Activated CD4-positive, alpha-beta T cell treated with anti-CD3 and anti-CD28 coated beads, Interleukin-2, amount 10 ng/mL, durations not matched to agents 24 days and 14 days (primary cell): ENCODE measurements at regions of chr11 and their contacts with region 1.

Region 1: GRCh38 chr11:122853971-122854446 is 15.7 kb downstream of the CRTAM start:
- DNase-seq: peak; percentile 85
- H3K4me3 Mint-ChIP-seq: no peak overlapping the region
- H3K27ac Mint-ChIP-seq: no peak overlapping the region
- H3K4me1 Mint-ChIP-seq: peaks cover 41% of the 10 kb centered on the region
- H3K27me3 Mint-ChIP-seq: peaks cover 17% of the 10 kb centered on the region

Region 2: GRCh38 chr11:122628810-122629555 is 225.0 kb before region 1 on chr11:
- intact Hi-C with region 1: loop called (anchors 1 kb)
- DNase-seq: peak; percentile 88
- H3K4me3 Mint-ChIP-seq: no peak overlapping the region
- H3K27ac Mint-ChIP-seq: no peak overlapping the region
- H3K4me1 Mint-ChIP-seq: no peaks in the 10 kb centered on the region
- H3K27me3 Mint-ChIP-seq: peaks cover 20% of the 10 kb centered on the region

Region 3: GRCh38 chr11:122697636-122698167 is 156.3 kb before region 1 on chr11:
- intact Hi-C with region 1: loop called (anchors 2 kb)
- DNase-seq: peak; percentile 79
- H3K4me3 Mint-ChIP-seq: peak overlapping the region; percentile 63
- H3K27ac Mint-ChIP-seq: peak overlapping the region; percentile 82
- H3K4me1 Mint-ChIP-seq: peaks cover 43% of the 10 kb centered on the region
- H3K27me3 Mint-ChIP-seq: peaks cover 5% of the 10 kb centered on the region

Region 4: DNA sequence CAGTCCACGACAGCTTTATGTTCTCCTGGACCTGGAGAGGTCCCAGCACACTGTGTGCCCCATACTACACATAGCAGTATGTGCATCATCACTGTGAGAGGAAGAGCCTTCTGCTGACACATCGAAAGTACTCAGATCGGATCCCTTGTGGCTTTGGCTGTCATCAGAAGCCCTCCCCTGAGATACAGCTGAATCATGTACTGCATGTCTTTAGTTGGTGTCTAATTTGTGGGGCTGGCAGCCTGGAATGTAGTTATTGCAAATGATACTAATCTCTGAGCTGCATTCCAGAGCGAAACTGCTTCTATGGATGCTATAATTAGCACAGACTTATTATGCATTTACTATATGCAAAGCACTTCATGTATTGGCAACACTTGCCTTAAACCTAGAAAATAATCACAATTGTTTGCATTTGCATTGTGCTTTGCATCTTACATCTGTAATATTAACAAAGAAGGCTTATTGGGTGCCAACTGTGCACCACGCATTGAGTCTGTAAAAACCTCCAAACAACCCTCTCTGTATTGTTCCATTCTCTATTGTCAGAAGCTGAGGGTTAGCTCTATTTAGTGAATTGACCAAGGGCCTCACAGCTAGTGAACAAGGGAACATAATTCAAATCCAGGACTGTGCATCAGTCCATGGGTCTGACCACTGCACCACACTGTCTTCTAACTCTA is 104.9 kb before region 1 on chr11:
- intact Hi-C with region 1: loop called (anchors 1 kb)
- DNase-seq: peak; percentile 87
- H3K4me3 Mint-ChIP-seq: no peak overlapping the region
- H3K27ac Mint-ChIP-seq: peak overlapping the region; percentile 17
- H3K4me1 Mint-ChIP-seq: peaks cover 20% of the 10 kb centered on the region
- H3K27me3 Mint-ChIP-seq: peaks cover 21% of the 10 kb centered on the region

Region 5: DNA sequence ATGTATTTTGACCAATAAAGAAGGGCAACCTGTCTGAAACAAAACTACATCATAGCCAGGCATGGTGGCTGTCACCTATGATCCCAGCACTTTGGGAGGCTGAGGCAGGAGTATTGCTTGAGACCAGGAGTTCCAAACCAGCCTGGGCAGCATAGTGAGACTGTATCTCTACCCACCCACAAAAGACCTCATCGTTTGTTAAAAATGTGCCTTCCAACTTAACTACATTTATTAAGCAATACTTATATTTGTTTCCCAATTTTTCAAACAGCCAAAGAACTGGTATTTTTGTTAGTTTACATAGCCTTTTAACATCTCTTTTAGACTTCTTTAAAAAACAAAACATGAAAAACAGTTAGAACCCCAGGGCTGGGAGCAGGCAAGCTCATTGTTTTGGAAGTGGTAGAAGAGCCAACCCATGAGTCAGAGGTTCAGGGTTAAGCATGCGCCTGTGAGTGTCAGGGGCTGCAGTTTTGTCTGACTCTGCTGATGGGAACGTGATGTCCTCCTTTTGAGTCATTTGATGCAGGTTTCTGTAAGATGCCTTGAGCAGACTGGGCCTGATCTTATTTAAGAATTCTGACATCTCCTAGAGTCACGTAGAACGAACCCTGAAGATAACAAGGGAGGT is 69.6 kb before region 1 on chr11:
- intact Hi-C with region 1: no loop called
- DNase-seq: no peak
- H3K4me3 Mint-ChIP-seq: no peak overlapping the region
- H3K27ac Mint-ChIP-seq: no peak overlapping the region
- H3K4me1 Mint-ChIP-seq: no peaks in the 10 kb centered on the region
- H3K27me3 Mint-ChIP-seq: no peaks in the 10 kb centered on the region

Region 6: GRCh38 chr11:122796128-122796717 is 57.8 kb before region 1 on chr11:
- intact Hi-C with region 1: loop called (anchors 1 kb)
- DNase-seq: peak; percentile 88
- H3K4me3 Mint-ChIP-seq: no peak overlapping the region
- H3K27ac Mint-ChIP-seq: no peak overlapping the region
- H3K4me1 Mint-ChIP-seq: no peaks in the 10 kb centered on the region
- H3K27me3 Mint-ChIP-seq: no peaks in the 10 kb centered on the region

Region 7: GRCh38 chr11:122843281-122844141 is 10.5 kb before region 1 on chr11:
- intact Hi-C with region 1: loop called (anchors 2 kb)
- DNase-seq: peak; percentile 75
- H3K4me3 Mint-ChIP-seq: peak overlapping the region; percentile 56
- H3K27ac Mint-ChIP-seq: peak overlapping the region; percentile 87
- H3K4me1 Mint-ChIP-seq: peaks cover 17% of the 10 kb centered on the region
- H3K27me3 Mint-ChIP-seq: no peaks in the 10 kb centered on the region

Region 8: DNA sequence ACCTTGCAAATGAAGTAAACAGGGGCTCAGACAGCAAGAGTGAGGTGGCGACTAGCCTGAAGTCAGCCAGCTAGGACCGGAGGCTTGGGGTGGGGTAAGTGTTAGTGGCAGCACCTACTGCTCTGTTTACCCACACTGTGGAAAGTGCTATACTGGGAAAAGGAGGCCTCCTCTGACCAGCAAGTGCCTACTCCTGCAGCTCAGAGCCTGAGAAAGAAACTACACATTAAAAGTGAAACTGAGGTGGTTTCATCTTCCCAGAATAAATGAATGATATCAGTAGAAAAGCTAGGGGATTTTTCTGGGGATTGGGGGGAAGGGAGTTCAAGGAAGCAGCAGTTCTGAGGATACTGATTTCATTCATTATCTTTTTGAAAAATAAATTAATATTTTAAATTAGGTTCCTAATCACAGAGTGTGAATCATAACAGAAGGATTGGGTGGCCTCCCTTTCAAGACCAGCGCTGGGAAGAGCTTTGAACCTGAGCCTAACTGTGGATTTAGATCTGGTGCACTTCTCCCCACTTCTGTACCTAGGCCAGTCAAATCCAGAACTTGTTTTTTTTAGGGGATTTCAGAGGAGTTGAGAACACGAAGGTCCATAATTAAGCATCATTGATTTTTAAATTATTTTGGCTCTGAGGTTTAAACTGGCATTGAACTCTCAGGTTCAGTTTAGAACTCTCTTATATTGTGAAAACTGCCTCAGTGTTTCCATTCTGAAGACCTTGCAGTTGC is 528.0 kb after region 1 on chr11:
- intact Hi-C with region 1: loop called (anchors 10 kb)
- DNase-seq: peak; percentile 89
- H3K4me3 Mint-ChIP-seq: peak overlapping the region; percentile 52
- H3K27ac Mint-ChIP-seq: no peak overlapping the region
- H3K4me1 Mint-ChIP-seq: peaks cover 42% of the 10 kb centered on the region
- H3K27me3 Mint-ChIP-seq: no peaks in the 10 kb centered on the region